Endothelial cell of umbilical vein (primary cell): ENCODE measurements at regions of chr1 and their contacts with region 1.

Region 1: DNA sequence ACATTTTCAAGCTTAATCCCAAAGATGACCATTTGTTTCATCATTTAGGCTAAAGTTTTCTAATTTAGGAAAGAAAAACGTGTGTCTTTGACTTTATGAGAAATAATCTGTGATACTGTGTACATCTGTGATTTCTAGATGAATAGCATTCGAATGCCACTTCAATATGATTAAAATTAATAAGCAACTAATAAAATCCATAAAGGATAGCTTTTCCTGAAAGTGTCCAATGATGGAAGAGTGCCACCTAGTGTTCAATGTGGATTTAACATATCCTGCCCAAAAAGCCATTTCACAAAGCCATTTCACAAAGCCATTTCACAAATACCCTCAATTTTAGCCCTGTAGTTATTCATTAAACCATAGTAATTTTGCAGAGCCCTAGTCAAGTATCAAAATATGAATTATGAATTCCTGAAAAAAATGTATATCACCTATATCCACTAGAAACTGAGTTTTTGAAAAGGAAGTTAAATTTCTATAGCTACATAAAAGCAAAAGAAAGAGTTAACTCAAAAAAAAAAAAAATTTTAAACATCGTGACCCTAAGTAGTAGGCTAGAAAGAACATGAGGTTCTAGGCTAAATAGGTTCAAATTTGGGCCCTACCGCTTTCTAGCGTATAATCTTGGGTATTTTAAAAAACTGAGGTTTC is 19.1 kb downstream of the NME7 start:
- DNase-seq: peak; percentile 74
- H3K4me3 ChIP-seq: no peak overlapping the region
- H3K27ac ChIP-seq: no peak overlapping the region
- H3K4me1 ChIP-seq: no peaks in the 10 kb centered on the region
- H3K27me3 ChIP-seq: no peaks in the 10 kb centered on the region
- CTCF ChIP-seq: peak; percentile 40 to 43
- POLR2A ChIP-seq: no peak

Region 2: DNA sequence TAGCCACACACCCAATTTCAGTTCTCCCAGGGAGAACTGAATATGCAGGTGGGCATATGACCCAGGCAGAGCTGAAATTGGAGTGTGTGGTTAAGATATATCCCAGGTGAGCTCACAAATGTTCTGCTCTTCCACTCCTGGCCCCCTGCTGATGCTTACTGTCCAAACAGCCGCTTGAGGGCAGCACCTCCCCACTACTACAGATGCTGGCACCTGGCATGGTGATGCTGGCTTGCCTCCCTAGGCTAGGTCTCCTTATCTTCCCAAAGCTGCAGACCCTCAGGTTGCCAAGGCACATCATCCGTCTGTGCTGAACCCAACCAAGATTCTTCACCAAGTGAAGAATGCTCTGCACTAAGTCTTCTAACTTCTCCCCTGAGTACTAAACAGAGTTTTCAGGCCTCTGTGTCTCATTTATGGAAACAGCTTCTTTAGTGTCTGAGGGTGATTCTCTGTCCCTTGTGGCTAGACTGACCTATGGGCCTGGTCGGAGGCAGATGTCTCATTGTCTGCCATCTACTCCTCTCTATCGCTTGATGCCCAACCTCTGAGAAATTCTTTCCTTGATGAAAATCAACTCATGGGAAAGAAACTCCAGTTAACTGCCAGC is 744.9 kb before region 1 on chr1:
- CTCF ChIA-PET with region 1: interaction called, 282 read pairs
- POLR2A ChIA-PET with region 1: no interaction called
- dilution Hi-C with region 1: no loop called
- intact Hi-C with region 1: loop called (anchors 1 kb)
- DNase-seq: peak; percentile 54
- H3K4me3 ChIP-seq: no peak overlapping the region
- H3K27ac ChIP-seq: no peak overlapping the region
- H3K4me1 ChIP-seq: no peaks in the 10 kb centered on the region
- H3K27me3 ChIP-seq: no peaks in the 10 kb centered on the region
- CTCF ChIP-seq: peak; percentile 70 to 77
- POLR2A ChIP-seq: no peak

Region 3: GRCh38 chr1:168734946-168735345 is 613.6 kb before region 1 on chr1:
- CTCF ChIA-PET with region 1: interaction called, 13 read pairs
- POLR2A ChIA-PET with region 1: no interaction called
- dilution Hi-C with region 1: no loop called
- intact Hi-C with region 1: no loop called
- DNase-seq: no peak
- H3K4me3 ChIP-seq: no peak overlapping the region
- H3K27ac ChIP-seq: no peak overlapping the region
- H3K4me1 ChIP-seq: no peaks in the 10 kb centered on the region
- H3K27me3 ChIP-seq: no peaks in the 10 kb centered on the region
- CTCF ChIP-seq: no peak
- POLR2A ChIP-seq: no peak

Region 4: GRCh38 chr1:169115891-169116585 is 232.5 kb before region 1 on chr1:
- CTCF ChIA-PET with region 1: interaction called, 41 read pairs
- POLR2A ChIA-PET with region 1: no interaction called
- dilution Hi-C with region 1: no loop called
- intact Hi-C with region 1: no loop called
- DNase-seq: no peak
- H3K4me3 ChIP-seq: no peak overlapping the region
- H3K27ac ChIP-seq: no peak overlapping the region
- H3K4me1 ChIP-seq: peaks cover 36% of the 10 kb centered on the region
- H3K27me3 ChIP-seq: no peaks in the 10 kb centered on the region
- CTCF ChIP-seq: no peak
- POLR2A ChIP-seq: no peak

Region 5: DNA sequence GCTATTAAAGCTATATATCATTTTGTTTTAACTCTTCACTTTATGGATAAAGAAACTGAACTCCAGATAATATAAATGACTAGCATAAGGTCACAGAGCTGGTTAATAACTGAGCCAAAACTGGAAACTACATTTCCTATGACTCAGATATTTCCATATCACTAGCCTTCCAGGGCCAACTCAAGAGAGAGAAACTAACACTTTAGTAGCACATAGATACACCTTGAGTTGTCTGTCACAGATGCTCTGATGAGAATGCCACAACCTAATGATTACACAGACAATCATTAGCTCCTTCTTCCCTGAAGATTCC is 21.6 kb before region 1 on chr1:
- CTCF ChIA-PET with region 1: interaction called, 21 read pairs
- POLR2A ChIA-PET with region 1: no interaction called
- dilution Hi-C with region 1: no loop called
- intact Hi-C with region 1: no loop called
- DNase-seq: peak; percentile 83
- H3K4me3 ChIP-seq: peak overlapping the region in 1 of 3 experiments; percentile 19
- H3K27ac ChIP-seq: peak overlapping the region; percentile 23
- H3K4me1 ChIP-seq: peaks cover 17% of the 10 kb centered on the region
- H3K27me3 ChIP-seq: no peaks in the 10 kb centered on the region
- CTCF ChIP-seq: no peak
- POLR2A ChIP-seq: no peak

Region 6: GRCh38 chr1:169546087-169546995 is 197.8 kb after region 1 on chr1:
- CTCF ChIA-PET with region 1: interaction called, 33 read pairs
- POLR2A ChIA-PET with region 1: no interaction called
- dilution Hi-C with region 1: no loop called
- intact Hi-C with region 1: loop called (anchors 1 kb)
- DNase-seq: peak; percentile 66
- H3K4me3 ChIP-seq: no peak overlapping the region
- H3K27ac ChIP-seq: no peak overlapping the region
- H3K4me1 ChIP-seq: no peaks in the 10 kb centered on the region
- H3K27me3 ChIP-seq: peaks cover 0 to 2% of the 10 kb centered on the region in 2 experiments
- CTCF ChIP-seq: peak; percentile 63 to 66
- POLR2A ChIP-seq: no peak